Activated naive CD4-positive, alpha-beta T cell treated with anti-CD3 and anti-CD28 coated beads for 36 hours (primary cell): ENCODE measurements at regions of chr9 and their contacts with region 1.

Region 1: DNA sequence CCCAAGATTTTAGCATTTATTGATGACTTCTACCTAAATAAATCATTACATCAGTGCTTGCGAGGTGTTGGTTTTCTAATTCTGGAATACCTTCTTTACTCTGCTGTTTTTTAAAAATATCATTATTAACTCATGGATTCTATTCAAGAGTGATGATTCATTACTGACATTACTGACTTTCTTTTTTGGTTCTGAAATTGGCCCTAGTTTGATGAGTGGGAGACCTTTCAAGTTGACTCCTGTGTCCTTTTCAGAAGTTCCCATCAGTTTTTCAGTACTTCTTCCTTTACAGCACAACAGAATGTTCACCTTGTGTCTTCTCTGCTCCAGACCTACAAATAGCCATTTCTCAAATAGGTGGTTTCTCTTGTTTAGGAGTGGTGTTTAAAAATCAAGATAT is 114.1 kb downstream of the PCSK5 start:
- DNase-seq: no peak
- H3K4me3 Mint-ChIP-seq: no peak overlapping the region
- H3K27ac Mint-ChIP-seq: peak overlapping the region; percentile 20
- H3K4me1 Mint-ChIP-seq: peaks cover 77% of the 10 kb centered on the region
- H3K27me3 Mint-ChIP-seq: no peaks in the 10 kb centered on the region

Region 2: GRCh38 chr9:75148561-75148960 is 856.0 kb before region 1 on chr9:
- CTCF ChIA-PET with region 1: interaction called, 3 read pairs
- intact Hi-C with region 1: loop called (anchors 5 kb)
- DNase-seq: peak; percentile 32
- H3K4me3 Mint-ChIP-seq: no peak overlapping the region
- H3K27ac Mint-ChIP-seq: peak overlapping the region; percentile 83
- H3K4me1 Mint-ChIP-seq: peaks cover 64% of the 10 kb centered on the region
- H3K27me3 Mint-ChIP-seq: no peaks in the 10 kb centered on the region

Region 3: GRCh38 chr9:75669701-75670100 is 334.8 kb before region 1 on chr9:
- CTCF ChIA-PET with region 1: no interaction called
- intact Hi-C with region 1: loop called (anchors 10 kb)
- DNase-seq: no peak
- H3K4me3 Mint-ChIP-seq: no peak overlapping the region
- H3K27ac Mint-ChIP-seq: no peak overlapping the region
- H3K4me1 Mint-ChIP-seq: peaks cover 3% of the 10 kb centered on the region
- H3K27me3 Mint-ChIP-seq: peaks cover 34% of the 10 kb centered on the region

Region 4: GRCh38 chr9:75993434-75993833 is 11.1 kb before region 1 on chr9:
- CTCF ChIA-PET with region 1: interaction called, 4 read pairs
- intact Hi-C with region 1: loop called (anchors 1 kb)
- DNase-seq: no peak
- H3K4me3 Mint-ChIP-seq: no peak overlapping the region
- H3K27ac Mint-ChIP-seq: peak overlapping the region; percentile 59
- H3K4me1 Mint-ChIP-seq: peaks cover 68% of the 10 kb centered on the region
- H3K27me3 Mint-ChIP-seq: no peaks in the 10 kb centered on the region

Region 5: DNA sequence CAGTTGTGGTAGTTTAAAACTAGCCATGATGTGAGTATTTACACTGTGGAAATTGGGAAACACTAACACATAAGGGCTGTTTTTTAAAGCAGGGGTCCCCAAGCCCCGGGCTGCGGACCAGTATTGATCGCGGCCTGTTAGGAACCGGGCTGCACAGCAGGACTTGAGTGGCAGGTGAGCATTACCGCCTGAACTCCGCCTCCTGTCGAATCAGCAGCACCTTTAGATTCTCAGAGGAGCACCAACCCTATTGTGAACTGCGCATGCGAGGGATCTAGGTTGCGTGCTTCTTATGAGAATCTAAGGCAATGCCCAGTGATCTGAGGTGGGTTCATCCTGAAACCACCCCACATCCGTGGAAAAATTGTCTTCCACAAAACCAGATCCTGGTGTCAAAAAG is 13.7 kb after region 1 on chr9:
- CTCF ChIA-PET with region 1: interaction called, 10 read pairs
- intact Hi-C with region 1: loop called (anchors 1 kb)
- DNase-seq: peak; percentile 27
- H3K4me3 Mint-ChIP-seq: no peak overlapping the region
- H3K27ac Mint-ChIP-seq: peak overlapping the region; percentile 44
- H3K4me1 Mint-ChIP-seq: peaks cover 76% of the 10 kb centered on the region
- H3K27me3 Mint-ChIP-seq: no peaks in the 10 kb centered on the region

Region 6: DNA sequence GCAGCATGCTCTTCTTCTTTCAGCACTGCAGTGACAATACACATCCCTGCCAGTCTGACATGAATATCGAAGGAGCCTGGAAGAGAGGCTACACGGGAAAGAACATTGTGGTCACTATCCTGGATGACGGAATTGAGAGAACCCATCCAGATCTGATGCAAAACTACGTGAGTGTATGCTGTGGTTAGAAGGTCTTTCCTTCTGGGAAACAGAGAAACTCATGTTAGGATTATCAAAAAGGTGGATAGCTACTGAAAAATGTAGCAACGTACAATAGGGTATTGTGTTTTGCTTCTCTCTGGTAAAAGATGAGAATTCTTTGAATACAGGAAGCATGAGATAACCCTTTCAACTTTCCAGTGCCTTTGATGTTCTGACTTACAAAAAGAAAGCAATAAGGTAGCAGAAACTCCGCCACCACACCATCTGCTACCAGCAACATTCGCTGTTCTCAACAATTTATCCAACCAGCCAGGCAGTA is 19.2 kb after region 1 on chr9:
- CTCF ChIA-PET with region 1: interaction called, 10 read pairs
- intact Hi-C with region 1: loop called (anchors 1 kb)
- DNase-seq: peak; percentile 64
- H3K4me3 Mint-ChIP-seq: peak overlapping the region; percentile 68
- H3K27ac Mint-ChIP-seq: peak overlapping the region; percentile 83
- H3K4me1 Mint-ChIP-seq: peaks cover 92% of the 10 kb centered on the region
- H3K27me3 Mint-ChIP-seq: no peaks in the 10 kb centered on the region

Region 7: DNA sequence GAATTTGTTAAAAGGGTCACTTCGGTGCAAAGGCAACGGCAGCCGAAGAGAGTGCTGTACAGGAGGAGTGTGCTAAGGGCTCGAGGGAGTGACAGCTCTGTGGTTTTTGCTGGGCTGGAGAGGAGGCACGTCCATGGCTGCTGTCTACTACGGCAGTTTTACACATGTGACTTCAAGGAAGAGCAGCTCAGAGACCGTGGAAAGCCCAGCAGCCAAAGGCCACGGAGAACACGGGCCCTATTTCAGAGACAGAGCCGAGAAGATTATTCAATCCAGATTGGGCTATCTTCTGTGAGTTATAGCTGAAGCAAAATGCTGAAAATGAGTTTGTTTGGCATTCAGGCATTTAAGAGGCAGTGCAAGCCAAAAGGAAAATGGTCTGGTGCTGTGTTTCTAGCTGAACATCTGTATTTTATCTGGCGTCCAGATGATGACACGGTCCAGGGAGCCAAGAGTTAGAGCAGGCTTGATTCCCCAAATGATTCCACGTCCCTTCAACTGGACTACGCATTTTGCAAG is 293.3 kb after region 1 on chr9:
- CTCF ChIA-PET with region 1: interaction called, 4 read pairs
- intact Hi-C with region 1: loop called (anchors 5 kb)
- DNase-seq: no peak
- H3K4me3 Mint-ChIP-seq: no peak overlapping the region
- H3K27ac Mint-ChIP-seq: no peak overlapping the region
- H3K4me1 Mint-ChIP-seq: peaks cover 4% of the 10 kb centered on the region
- H3K27me3 Mint-ChIP-seq: no peaks in the 10 kb centered on the region